ENCODE measurements at regions of chr5 and their contacts with region 1.

Region 1: GRCh38 chr5:133247881-133248624 is 196.2 kb downstream of the HSPA4 start:
- DNase-seq: no peak
- ATAC-seq: no peak
- H3K4me3 ChIP-seq: no peak overlapping the region
- H3K27ac ChIP-seq: no peak overlapping the region
- H3K4me1 ChIP-seq: peaks cover 44% of the 10 kb centered on the region
- H3K27me3 ChIP-seq: no peaks in the 10 kb centered on the region
- CTCF ChIP-seq: peak; percentile 57

Region 2: DNA sequence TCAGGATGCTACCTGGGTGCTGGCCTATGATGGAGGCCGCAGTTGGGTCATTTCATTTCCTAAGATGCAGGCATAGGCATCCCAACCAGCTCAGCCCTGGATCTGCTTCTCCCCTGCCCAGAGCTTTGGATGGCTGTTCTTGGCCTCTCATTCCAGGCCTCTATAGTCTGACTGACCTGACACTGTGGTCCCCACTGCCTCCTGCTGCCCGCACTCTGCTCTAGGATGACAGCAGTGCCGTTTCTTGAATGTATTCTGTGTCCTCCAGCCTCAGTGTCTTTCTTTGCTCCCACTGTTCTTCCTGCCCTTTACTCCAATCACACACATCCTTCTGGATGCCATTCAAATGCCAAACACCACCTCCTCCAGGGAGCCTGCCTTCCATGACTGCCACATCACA is 39.4 kb after region 1 on chr5:
- CTCF ChIA-PET with region 1: interaction called, 6 read pairs
- POLR2A ChIA-PET with region 1: no interaction called
- intact Hi-C with region 1: loop called (anchors 2 kb)
- DNase-seq: peak; percentile 53
- ATAC-seq: peak; percentile 46
- H3K4me3 ChIP-seq: no peak overlapping the region
- H3K27ac ChIP-seq: no peak overlapping the region
- H3K4me1 ChIP-seq: peaks cover 29% of the 10 kb centered on the region
- H3K27me3 ChIP-seq: no peaks in the 10 kb centered on the region
- CTCF ChIP-seq: peak; percentile 73